G401 (cell line): ENCODE measurements at regions of chr15 and their contacts with region 1.

Region 1: GRCh38 chr15:65869127-65869953 is at the start of gene RAB11A:
- DNase-seq: peak; percentile 98
- total RNA-seq, gene RAB11A: 280 and 333 TPM in 2 replicates

Region 2: GRCh38 chr15:65638681-65639089 is 230.7 kb before region 1 on chr15:
- in situ Hi-C with region 1: loop called (anchors 25 kb)
- DNase-seq: peak; percentile 82

Region 3: DNA sequence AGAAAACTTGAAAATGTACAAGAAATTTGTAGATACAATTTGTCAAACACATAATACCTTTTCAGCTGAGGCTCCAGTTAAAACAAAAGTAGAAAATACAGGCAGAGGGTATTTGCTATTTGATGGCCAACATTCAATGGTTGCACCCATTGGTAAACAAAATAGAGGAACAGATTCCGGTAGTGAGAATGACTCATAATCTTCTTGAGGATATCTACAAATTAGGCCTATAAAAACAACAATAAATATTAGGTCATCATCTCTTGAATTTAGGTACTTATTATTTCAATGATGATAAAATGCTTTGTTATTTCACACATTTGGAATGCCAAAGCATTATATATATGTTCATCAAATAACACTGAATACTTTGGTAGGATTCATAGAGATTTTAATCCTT is 130.7 kb before region 1 on chr15:
- in situ Hi-C with region 1: no loop called
- DNase-seq: no peak

Region 4: GRCh38 chr15:65927545-65927944 is 58.2 kb after region 1 on chr15:
- in situ Hi-C with region 1: no loop called
- DNase-seq: no peak

Region 5: DNA sequence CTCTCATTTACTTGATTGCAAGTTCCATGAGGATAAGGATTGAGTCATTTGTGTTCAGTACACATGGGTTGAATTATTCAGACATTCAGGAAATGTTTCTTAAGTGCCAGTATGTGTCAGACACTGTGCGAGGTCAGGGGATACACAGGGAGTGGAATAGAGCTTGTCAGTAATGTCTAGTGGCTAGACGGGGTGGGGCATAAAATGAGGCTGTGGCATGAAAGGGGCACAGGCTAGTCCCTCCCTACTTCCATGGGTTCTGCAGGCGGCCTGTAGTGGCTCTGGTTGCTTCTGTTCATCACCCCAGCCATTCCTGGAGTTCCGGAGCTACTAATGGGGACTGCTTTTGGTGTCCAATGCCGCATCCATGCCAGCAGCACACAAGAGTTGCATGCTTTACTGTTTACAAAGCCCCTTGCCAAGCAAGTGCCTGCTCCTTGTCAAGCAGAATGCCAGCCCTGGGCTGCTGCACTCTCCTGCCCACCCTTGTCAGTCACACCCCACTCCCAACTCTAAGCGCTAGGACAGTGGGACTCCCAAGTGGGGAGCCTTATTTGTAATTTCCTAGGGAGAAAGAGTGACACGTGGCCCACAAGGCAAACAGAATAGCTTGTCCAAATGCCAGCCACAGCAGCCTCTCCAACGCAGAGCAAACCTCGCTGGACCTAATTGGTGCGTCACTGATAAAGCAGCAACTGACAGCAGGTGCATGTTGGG is 70.7 kb after region 1 on chr15:
- in situ Hi-C with region 1: no loop called
- DNase-seq: no peak

Region 6: DNA sequence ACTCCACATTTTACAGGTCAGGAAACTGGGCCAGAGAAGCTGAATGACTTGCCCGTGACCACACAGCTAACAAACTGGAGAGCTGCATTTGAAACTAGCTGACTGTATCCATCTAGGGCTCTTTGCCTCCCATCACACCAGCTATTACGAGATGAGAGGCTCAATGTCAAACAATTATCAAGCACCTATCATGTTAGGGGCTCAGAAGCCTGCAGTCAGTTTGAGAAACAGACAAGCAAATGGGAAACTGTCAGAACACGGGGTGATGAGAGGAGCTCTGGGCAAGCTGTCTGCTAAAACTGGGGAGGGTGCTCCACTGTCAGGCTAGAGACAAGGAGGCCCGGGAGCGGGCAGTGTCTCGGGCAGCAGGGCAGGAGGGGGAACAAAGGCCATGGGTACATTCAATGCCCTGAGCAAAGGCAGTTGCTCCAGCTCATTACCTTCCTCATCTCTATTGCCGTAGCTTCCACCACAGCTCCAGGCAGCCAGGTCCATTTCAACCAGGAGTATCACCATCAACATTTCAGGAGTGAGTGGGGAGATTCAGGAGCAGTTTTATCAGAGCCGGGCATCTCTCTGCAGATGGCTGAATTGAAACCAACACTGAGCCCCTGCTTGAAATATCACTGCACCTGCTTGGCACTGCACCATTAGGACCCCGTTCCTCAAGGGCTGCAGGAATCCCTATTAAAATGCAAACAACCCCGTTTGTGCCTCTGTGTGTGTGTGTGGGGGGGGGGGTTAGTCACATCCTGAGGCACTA is 122.6 kb after region 1 on chr15:
- in situ Hi-C with region 1: no loop called
- DNase-seq: peak; percentile 50